ENCODE measurements at regions of chr19 and their contacts with region 1.

Region 1: GRCh38 chr19:55503502-55504251 is 15.4 kb downstream of the SSC5D start:
- DNase-seq: peak; percentile 75 to 96 (median 87)
- ATAC-seq: peak; percentile 94 to 97 (median 96)
- H3K4me3 ChIP-seq: peak overlapping the region; percentile 50 to 79
- H3K4me3 Mint-ChIP-seq: peak overlapping the region; percentile 73 to 78 (median 73)
- H3K27ac ChIP-seq: peak overlapping the region; percentile 2
- H3K27ac Mint-ChIP-seq: peak overlapping the region; percentile 31 to 77
- H3K4me1 ChIP-seq: peaks cover 0 to 15% of the 10 kb centered on the region in 2 experiments
- H3K4me1 Mint-ChIP-seq: peaks cover 10 to 22% (median 13%) of the 10 kb centered on the region in 3 donors
- H3K27me3 ChIP-seq: peaks cover 0 to 16% of the 10 kb centered on the region in 2 experiments
- H3K27me3 Mint-ChIP-seq: peaks cover 7 to 8% of the 10 kb centered on the region in 2 donors

Region 2: DNA sequence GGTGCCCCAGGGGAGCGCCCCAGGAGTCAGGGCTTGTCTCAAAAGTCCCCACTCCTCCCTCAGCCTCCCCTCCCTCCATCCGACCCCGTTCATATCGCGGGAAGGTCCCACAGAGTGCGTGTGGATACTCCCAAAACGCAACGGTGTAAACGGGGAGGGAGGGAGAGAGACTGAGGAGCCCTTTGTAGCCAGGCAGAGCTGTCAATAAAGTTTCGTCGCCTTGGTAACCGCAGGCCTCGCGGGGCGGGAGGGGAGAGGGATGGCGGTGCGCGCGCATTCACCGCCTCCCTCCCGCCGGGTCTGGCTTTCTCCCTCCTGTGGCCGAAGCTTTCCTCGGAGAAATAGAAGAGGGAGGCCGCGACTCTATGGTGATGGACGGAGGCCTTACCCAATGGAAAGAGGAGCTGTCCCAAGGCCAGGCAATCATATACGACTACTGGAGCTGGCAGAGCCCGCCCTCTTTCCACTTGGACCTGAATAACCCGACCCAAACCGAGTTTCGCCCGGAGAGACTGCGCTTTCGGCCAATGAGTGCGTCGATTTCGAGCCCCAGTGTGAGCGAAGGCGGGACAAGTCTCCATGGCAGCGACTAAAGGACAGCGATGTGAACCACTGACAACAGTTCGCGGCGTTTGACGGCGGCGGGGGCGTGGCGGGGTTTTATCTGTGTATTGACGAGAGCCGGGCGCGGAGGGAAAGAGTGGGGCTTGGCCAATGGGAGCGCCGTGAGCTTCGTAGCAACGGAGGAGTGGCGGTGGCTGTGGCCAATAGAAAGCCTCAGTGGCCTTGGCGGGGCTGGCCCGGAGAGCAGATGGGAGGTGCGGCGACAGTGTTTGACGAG is 164.4 kb before region 1 on chr19 and contains the start of gene KMT5C:
- CTCF ChIA-PET with region 1: interaction called in 1 of 2 experiments, 10 read pairs
- POLR2A ChIA-PET with region 1: no interaction called
- DNase-seq: peak; percentile 100
- ATAC-seq: peak; percentile 78 to 84 (median 82)
- H3K4me3 ChIP-seq: peak within 1 kb of the TSS; percentile 64 to 72
- H3K4me3 Mint-ChIP-seq: peak within 1 kb of the TSS; percentile 78 to 92 (median 92)
- H3K27ac ChIP-seq: peak within 1 kb of the TSS; percentile 99
- H3K27ac Mint-ChIP-seq: peak within 1 kb of the TSS; percentile 88
- H3K4me1 ChIP-seq: peaks cover 6 to 31% of the 10 kb centered on the region in 2 experiments
- H3K4me1 Mint-ChIP-seq: peaks cover 19 to 25% (median 21%) of the 10 kb centered on the region in 3 donors
- H3K27me3 ChIP-seq: peaks cover 0 to 20% of the 10 kb centered on the region in 2 experiments
- H3K27me3 Mint-ChIP-seq: peaks cover 3 to 11% of the 10 kb centered on the region in 2 donors
- total RNA-seq, gene KMT5C: 24.4 to 71.8 (median 30.7) TPM

Region 3: DNA sequence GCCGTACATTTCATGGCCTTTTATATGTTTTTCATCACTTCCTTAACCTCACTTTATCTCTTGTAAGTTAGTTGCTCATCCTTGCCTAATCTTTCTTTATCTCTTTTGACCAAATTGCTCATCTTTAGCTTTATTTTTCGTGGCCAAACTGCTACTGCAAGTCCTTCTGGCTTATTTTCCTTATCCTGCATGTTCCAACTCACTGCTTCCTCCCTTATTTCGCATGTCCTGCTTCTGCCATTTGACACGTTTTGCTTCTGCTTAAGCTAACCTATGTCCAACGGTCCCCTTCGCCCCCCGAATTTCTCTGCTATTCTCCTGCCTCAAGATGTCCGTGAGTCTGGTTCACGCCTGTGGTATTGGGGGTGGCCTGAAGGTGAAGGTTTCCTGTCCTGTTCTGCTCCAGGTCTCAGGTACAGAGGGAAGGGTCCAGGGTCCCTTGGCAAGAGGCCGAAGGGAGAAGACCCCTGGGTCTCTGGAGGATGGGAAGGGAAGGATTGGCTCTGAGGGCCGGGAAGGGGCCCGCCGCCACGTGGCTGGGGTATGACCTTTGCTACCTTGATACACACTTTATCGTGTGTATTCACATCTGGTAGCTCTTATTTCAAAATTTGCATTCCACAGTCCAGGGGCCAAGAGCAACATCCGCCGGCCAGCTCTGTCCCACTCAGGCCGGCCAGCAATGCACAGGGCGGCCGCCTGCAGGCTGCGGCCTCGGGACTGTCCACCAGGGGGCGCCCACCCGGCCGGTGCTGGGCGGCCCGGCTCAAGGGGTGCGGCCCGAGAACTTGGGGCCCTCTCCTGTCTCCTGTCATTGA is 36.2 kb before region 1 on chr19:
- CTCF ChIA-PET with region 1: interaction called, 8 to 21 read pairs
- POLR2A ChIA-PET with region 1: no interaction called
- DNase-seq: peak in 27 of 35 experiments; percentile 20 to 78 (median 50)
- ATAC-seq: peak; percentile 84 to 96 (median 90)
- H3K4me3 ChIP-seq: no peak overlapping the region
- H3K4me3 Mint-ChIP-seq: no peak overlapping the region
- H3K27ac ChIP-seq: no peak overlapping the region
- H3K27ac Mint-ChIP-seq: peak overlapping the region in 1 of 2 donors; percentile 23
- H3K4me1 ChIP-seq: peaks cover 0 to 6% of the 10 kb centered on the region in 2 experiments
- H3K4me1 Mint-ChIP-seq: peaks cover 3 to 9% (median 6%) of the 10 kb centered on the region in 3 donors
- H3K27me3 ChIP-seq: peaks cover 0 to 9% of the 10 kb centered on the region in 2 experiments
- H3K27me3 Mint-ChIP-seq: no peaks in the 10 kb centered on the region

Region 4: GRCh38 chr19:55580628-55581144 is 77.0 kb after region 1 on chr19 and contains the start of gene ZNF579:
- CTCF ChIA-PET with region 1: no interaction called
- POLR2A ChIA-PET with region 1: interaction called in 1 of 2 experiments, 10 read pairs
- DNase-seq: peak in 34 of 35 experiments; percentile 37 to 81 (median 60)
- ATAC-seq: peak; percentile 69 to 77 (median 72)
- H3K4me3 ChIP-seq: peak within 1 kb of the TSS; percentile 71 to 75
- H3K4me3 Mint-ChIP-seq: peak within 1 kb of the TSS; percentile 81 to 89 (median 83)
- H3K27ac ChIP-seq: peak within 1 kb of the TSS; percentile 75
- H3K27ac Mint-ChIP-seq: peak within 1 kb of the TSS; percentile 87 to 94
- H3K4me1 ChIP-seq: peaks cover 8 to 26% of the 10 kb centered on the region in 2 experiments
- H3K4me1 Mint-ChIP-seq: peaks cover 24 to 32% (median 24%) of the 10 kb centered on the region in 3 donors
- H3K27me3 ChIP-seq: no peaks in the 10 kb centered on the region
- H3K27me3 Mint-ChIP-seq: peaks cover 0 to 2% of the 10 kb centered on the region in 2 donors
- total RNA-seq, gene ZNF579: 5.4 to 13.3 (median 10.0) TPM

Measured in T-cell (primary cell).